PC-3 (cell line): ENCODE measurements at regions of chr12 and their contacts with region 1.

Region 1: DNA sequence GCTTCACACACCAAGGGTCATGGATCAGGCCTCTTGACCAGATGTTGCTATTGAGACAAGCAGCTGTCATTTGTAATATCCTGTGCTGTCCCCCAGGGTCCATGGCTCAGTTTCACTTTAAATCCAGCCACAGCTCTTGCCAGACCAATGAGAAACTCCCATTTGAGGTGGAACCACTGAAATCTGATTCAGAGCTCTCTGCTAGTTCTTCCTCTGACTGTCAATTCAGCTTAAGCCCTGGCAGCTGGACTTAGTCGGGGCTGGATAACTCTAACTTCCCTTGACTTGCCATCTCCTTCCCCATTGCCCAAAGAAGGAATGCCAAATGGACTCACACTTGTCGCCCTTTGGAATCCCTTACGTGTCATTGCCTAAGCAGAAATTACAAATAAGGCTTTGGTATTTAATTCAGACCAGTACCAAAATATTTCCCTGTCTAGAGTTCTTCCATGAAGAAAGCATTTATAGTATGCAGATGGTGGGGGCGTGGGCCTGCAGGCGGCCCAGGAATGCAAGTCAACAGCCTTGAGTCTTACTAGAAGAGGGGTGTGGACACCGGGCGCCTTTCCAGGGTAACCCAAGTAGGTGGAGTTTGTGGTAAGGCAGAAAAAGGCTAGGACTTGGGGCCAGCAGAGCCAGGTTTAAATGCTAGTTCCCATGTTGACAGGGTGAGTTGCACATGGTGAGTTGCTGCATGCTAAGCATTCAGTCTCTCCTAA is 96.9 kb upstream of the TMPO start:
- DNase-seq: peak; percentile 92
- ATAC-seq: peak; percentile 97
- H3K4me3 ChIP-seq: peak overlapping the region; percentile 5; the same call in 1 of the 2 replicates
- H3K27ac ChIP-seq: 0 out of 2 replicates have a peak overlapping the region, but pooled peaks have one; percentile 0
- H3K4me1 ChIP-seq: peaks cover 15% of the 10 kb centered on the region
- H3K27me3 ChIP-seq: no peaks in the 10 kb centered on the region
- CTCF ChIP-seq: no peak

Region 2: DNA sequence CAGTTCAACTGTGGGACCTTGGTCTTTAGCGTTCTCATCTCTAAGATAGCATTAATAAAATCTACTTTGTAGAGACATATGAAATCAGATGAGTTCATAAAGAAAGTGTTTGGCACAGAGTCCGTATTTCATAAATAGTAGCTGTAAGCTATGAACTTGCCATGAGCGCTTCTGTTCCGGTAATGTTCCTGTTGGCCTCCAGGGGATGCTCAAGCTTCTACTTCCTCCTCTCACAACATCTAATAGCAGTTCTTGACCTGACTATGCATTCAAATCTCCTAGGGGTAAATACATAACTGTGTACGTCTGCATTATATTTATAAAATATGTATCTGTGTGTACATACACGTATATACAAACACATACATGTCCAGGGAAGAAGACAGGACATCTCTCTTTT is 191.4 kb before region 1 on chr12:
- CTCF ChIA-PET with region 1: no interaction called
- POLR2A ChIA-PET with region 1: no interaction called
- intact Hi-C with region 1: no loop called
- DNase-seq: no peak
- ATAC-seq: no peak
- H3K4me3 ChIP-seq: no peak overlapping the region
- H3K27ac ChIP-seq: no peak overlapping the region
- H3K4me1 ChIP-seq: no peaks in the 10 kb centered on the region
- H3K27me3 ChIP-seq: 0 out of 2 replicates have a peak, but pooled peaks cover 7% of the 10 kb centered on the region
- CTCF ChIP-seq: peak; percentile 49

Region 3: DNA sequence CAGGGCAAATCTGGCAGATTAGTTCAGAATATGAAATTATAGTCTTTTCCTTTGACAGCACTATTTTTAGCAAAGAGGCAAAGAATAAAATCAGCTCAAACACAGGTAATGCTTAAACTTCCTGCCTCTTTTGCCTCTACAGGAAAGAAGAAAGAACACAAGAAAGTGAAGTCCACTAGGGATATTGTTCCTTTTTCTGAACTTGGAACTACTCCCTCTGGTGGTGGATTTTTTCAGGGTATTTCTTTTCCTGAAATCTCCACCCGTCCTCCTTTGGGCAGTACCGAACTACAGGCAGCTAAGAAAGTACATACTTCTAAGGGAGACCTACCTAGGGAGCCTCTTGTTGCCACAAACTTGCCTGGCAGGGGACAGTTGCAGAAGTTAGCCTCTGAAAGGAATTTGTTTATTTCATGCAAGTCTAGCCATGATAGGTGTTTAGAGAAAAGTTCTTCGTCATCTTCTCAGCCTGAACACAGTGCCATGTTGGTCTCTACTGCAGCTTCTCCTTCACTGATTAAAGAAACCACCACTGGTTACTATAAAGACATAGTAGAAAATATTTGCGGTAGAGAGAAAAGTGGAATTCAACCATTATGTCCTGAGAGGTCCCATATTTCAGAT is 114.3 kb after region 1 on chr12:
- CTCF ChIA-PET with region 1: interaction called, 6 read pairs
- POLR2A ChIA-PET with region 1: no interaction called
- intact Hi-C with region 1: loop called (anchors 1 kb)
- DNase-seq: peak; percentile 89
- ATAC-seq: peak; percentile 81
- H3K4me3 ChIP-seq: no peak overlapping the region
- H3K27ac ChIP-seq: no peak overlapping the region
- H3K4me1 ChIP-seq: no peaks in the 10 kb centered on the region
- H3K27me3 ChIP-seq: no peaks in the 10 kb centered on the region
- CTCF ChIP-seq: peak; percentile 84

Region 4: GRCh38 chr12:98644711-98645402 is 226.3 kb after region 1 on chr12 and contains the starts of genes APAF1 and IKBIP:
- CTCF ChIA-PET with region 1: interaction called, 3 read pairs
- POLR2A ChIA-PET with region 1: no interaction called
- intact Hi-C with region 1: loop called (anchors 2 kb)
- DNase-seq: peak; percentile 97
- ATAC-seq: peak; percentile 86
- H3K4me3 ChIP-seq: peak within 1 kb of the TSS; percentile 88
- H3K27ac ChIP-seq: peak within 1 kb of the TSS; percentile 51
- H3K4me1 ChIP-seq: peaks cover 6% of the 10 kb centered on the region
- H3K27me3 ChIP-seq: no peaks in the 10 kb centered on the region
- CTCF ChIP-seq: no peak
- total RNA-seq, gene APAF1: 8.5 and 10.1 TPM in 2 replicates
- total RNA-seq, gene IKBIP: 11.1 and 14.6 TPM in 2 replicates

Region 5: DNA sequence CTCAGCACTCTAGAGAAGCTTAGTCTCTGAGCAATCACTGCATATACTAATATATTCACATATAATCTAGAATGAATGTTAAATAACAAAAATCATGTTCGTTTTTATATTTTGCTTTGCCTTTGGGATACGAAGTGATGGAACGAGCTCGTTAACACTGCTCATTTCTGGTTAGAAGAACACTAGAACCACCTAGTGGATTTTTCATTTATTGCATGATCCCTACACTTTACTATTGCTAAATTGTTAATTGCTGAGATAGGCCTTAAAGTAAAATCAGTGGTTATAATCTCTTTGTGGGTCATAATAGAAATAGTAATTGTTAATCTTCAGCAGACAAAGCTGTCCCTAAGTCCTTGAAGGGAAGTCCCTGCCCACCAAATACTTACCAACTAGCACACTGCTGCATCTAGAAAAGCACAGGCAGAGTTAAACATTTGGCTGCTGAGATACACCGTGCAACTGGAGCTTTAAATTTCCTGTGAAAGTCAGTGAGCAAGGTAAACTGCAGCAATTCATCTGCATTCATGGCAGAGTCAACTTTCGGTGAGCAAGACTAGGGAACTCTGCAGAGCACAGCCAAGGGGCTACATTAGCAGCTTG is 580.3 kb after region 1 on chr12:
- CTCF ChIA-PET with region 1: interaction called, 3 read pairs
- POLR2A ChIA-PET with region 1: no interaction called
- intact Hi-C with region 1: loop called (anchors 5 kb)
- DNase-seq: peak; percentile 79
- ATAC-seq: peak; percentile 88
- H3K4me3 ChIP-seq: no peak overlapping the region
- H3K27ac ChIP-seq: no peak overlapping the region
- H3K4me1 ChIP-seq: no peaks in the 10 kb centered on the region
- H3K27me3 ChIP-seq: peaks cover 23% of the 10 kb centered on the region
- CTCF ChIP-seq: peak; percentile 85